ENCODE measurements at regions of chr11 and their contacts with region 1.

Region 1: GRCh38 chr11:107043242-107044006 is 25.1 kb upstream of the GUCY1A2 start:
- DNase-seq: no peak
- H3K4me3 Mint-ChIP-seq: no peak overlapping the region
- H3K27ac Mint-ChIP-seq: peak overlapping the region; percentile 33
- H3K4me1 Mint-ChIP-seq: peaks cover 4% of the 10 kb centered on the region
- H3K27me3 Mint-ChIP-seq: no peaks in the 10 kb centered on the region

Region 2: GRCh38 chr11:106091480-106092123 is 951.8 kb before region 1 on chr11:
- intact Hi-C with region 1: loop called (anchors 2 kb)
- DNase-seq: no peak
- H3K4me3 Mint-ChIP-seq: no peak overlapping the region
- H3K27ac Mint-ChIP-seq: peak overlapping the region; percentile 57
- H3K4me1 Mint-ChIP-seq: peaks cover 45% of the 10 kb centered on the region
- H3K27me3 Mint-ChIP-seq: no peaks in the 10 kb centered on the region

Region 3: DNA sequence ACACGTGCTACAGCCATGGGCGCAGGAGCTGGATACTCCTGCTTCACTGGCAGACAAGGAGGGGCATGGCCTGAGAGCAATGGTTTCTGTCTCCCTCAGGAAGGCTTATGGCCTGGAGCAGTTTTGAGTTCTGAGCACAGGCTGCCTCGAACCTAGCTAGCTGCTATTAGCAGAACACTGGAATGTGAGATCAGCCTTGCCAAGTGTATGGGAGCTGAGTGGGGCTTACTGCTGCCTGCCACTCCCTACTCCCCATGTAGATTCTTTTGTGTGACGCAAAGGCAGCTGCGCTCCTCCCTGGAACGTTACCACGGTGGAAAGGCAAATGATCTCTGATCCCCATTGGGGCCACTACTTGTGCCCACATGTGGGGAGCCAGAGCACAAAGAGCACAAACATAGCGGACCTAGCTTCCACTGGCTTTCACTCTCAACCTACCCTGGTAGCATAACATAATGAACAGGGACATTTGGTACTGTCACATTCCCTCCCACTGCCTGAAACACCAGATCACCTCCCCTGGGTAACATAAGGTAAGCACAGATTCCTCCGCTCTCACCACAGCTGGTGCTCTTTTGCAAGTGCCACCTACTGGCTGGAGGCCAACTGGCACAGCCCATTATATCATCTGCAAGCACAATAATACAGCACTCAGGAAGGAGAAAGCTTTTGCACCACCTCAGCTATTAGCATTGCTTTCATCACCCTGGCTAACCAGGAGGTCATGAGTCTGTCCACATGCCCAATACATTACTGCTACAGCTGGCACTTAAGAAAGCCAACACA is 59.5 kb after region 1 on chr11:
- intact Hi-C with region 1: no loop called
- DNase-seq: no peak
- H3K4me3 Mint-ChIP-seq: no peak overlapping the region
- H3K27ac Mint-ChIP-seq: no peak overlapping the region
- H3K4me1 Mint-ChIP-seq: no peaks in the 10 kb centered on the region
- H3K27me3 Mint-ChIP-seq: no peaks in the 10 kb centered on the region

Measured in activated T-helper 2 cell treated with anti-CD3 and anti-CD28 coated beads, Interferon-gamma antibody, Interleukin-2, Interleukin-4, amounts not matched to agents 10 μg/mL and 5 μg/mL and 100 μg/mL, durations not matched to agents 14 hours and 24 hours and 36 hours (primary cell).